K562 (cell line): ENCODE measurements at regions of chr17 and their contacts with region 1.

Region 1: DNA sequence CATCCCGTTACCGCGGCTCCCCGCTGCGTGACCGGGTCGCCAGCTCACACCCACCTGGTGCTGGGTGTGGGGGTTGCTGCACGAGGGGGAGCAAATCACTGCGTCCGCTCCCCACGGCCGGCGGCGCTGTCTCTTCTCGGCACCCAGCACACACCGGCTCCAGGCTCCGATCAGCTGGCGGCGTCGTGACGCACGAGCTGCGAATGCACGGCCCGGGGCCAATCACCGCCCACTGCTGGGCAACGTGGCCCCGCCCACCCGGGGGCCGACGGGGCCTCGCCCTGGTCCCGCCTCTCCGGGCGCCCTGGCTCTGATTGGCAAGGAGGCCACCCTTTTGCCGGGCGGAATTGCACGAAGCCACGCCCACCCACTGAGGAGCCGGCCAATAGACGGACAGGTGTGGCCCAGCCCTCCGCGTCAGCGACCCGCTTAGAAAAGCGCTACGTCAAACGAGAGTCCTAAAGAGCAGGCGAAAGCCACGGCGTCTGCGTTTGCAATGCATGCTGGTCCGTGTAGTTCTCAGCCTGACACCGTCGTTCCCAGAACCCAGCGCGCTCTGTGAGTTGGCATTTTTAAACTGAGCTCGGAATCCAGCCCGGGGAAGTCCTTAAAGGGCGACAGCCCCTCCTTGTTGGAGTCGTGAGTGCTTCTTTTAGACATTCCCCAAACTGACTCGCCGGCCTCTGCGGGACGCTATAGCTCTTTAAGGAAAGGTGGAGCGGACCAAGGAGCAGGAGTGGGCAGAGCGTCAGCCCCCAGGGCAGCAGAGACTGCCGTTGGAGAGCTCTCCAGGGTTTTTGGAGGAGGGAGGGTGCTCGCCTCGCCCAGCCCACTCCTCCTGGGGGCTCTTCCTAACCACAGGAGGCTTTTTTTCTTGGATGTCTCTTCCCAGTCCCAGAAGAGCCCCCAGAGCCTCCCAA is 6.2 kb upstream of the TLCD2 start:
- DNase-seq: peak; percentile 89 to 99 (median 94)
- ATAC-seq: peak; percentile 78
- H3K4me3 ChIP-seq: peak overlapping the region; percentile 85
- H3K27ac ChIP-seq: peak overlapping the region; percentile 99
- H3K4me1 ChIP-seq: peaks cover 39 to 50% of the 10 kb centered on the region in 2 experiments
- H3K27me3 ChIP-seq: no peaks in the 10 kb centered on the region
- CTCF ChIP-seq: peak in 2 of 3 experiments; percentile 6 to 10; a peak in 1 of 6 replicates
- EP300 ChIP-seq: peak; percentile 22; the same call in 1 of the 2 replicates
- POLR2A ChIP-seq: peak; percentile 86
- RAD21 ChIP-seq: peak in 1 of 2 experiments; percentile 14; a peak in 1 of 4 replicates

Region 2: DNA sequence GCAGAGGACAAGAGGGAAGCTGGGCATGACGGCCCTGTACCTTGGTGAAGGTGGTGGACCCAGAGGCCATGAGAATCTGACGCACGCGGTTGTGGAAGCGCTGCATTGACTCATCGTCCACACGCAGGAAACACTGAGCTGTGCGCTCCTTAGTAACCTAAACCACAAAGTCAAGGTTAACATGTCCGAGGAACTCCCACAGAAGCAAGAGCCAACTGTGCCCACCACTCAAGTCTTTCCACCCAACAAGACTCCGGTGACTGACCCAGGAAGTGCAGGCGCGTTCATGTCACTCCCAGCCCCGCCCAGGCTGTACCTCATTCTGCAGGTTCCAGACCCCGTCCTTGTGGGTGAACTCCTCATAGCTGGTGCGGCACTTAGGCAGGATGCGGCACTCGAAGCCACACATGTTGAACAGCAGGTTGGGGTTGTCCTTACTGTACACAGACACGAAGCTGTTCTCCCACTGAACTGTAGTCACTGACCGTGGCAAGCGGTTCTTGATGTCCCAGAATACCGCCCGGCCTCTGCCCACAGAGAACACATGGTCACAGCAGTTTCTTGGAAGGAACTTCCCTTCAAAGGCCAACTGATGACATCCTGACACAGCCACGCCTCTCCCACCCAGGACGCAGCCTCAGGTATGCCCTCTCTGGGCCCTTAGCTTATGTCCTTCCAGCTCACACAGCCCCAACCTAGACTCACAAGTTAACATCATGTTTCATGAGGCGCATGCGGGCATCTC is 43.1 kb before region 1 on chr17:
- CTCF ChIA-PET with region 1: no interaction called
- POLR2A ChIA-PET with region 1: interaction called, 4 read pairs
- in situ Hi-C with region 1: loop called (anchors 5 kb)
- intact Hi-C with region 1: no loop called
- DNase-seq: no peak
- ATAC-seq: no peak
- H3K4me3 ChIP-seq: no peak overlapping the region
- H3K27ac ChIP-seq: no peak overlapping the region; the same call in 2 of the 3 replicates
- H3K4me1 ChIP-seq: peaks cover 0 to 3% of the 10 kb centered on the region in 2 experiments; a peak in 2 of 5 replicates
- H3K27me3 ChIP-seq: no peaks in the 10 kb centered on the region
- CTCF ChIP-seq: no peak
- EP300 ChIP-seq: no peak
- POLR2A ChIP-seq: no peak
- RAD21 ChIP-seq: no peak

Region 3: GRCh38 chr17:1705004-1705403 is 11.3 kb before region 1 on chr17:
- CTCF ChIA-PET with region 1: no interaction called
- POLR2A ChIA-PET with region 1: interaction called, 12 read pairs
- in situ Hi-C with region 1: no loop called
- intact Hi-C with region 1: no loop called
- DNase-seq: peak in 3 of 4 experiments; percentile 29 to 83 (median 69)
- ATAC-seq: peak; percentile 82
- H3K4me3 ChIP-seq: no peak overlapping the region
- H3K27ac ChIP-seq: no peak overlapping the region
- H3K4me1 ChIP-seq: peaks cover 8 to 27% of the 10 kb centered on the region in 2 experiments; a peak in 4 of 5 replicates
- H3K27me3 ChIP-seq: no peaks in the 10 kb centered on the region
- CTCF ChIP-seq: no peak
- EP300 ChIP-seq: peak; percentile 38; the same call in 1 of the 2 replicates
- POLR2A ChIP-seq: no peak
- RAD21 ChIP-seq: no peak

Region 4: GRCh38 chr17:1764284-1764683 is 47.9 kb after region 1 on chr17:
- CTCF ChIA-PET with region 1: no interaction called
- POLR2A ChIA-PET with region 1: interaction called, 11 read pairs
- in situ Hi-C with region 1: no loop called
- intact Hi-C with region 1: loop called (anchors 5 kb)
- DNase-seq: peak in 1 of 4 experiments; percentile 20
- ATAC-seq: no peak
- H3K4me3 ChIP-seq: no peak overlapping the region
- H3K27ac ChIP-seq: 0 out of 3 replicates have a peak overlapping the region, but pooled peaks have one; percentile 28
- H3K4me1 ChIP-seq: peaks cover 21 to 34% of the 10 kb centered on the region in 2 experiments; a peak in 4 of 5 replicates
- H3K27me3 ChIP-seq: no peaks in the 10 kb centered on the region
- CTCF ChIP-seq: no peak
- EP300 ChIP-seq: no peak
- POLR2A ChIP-seq: no peak
- RAD21 ChIP-seq: no peak